Naive thymus-derived CD4-positive, alpha-beta T cell (primary cell): ENCODE measurements at regions of chr17 and their contacts with region 1.

Region 1: DNA sequence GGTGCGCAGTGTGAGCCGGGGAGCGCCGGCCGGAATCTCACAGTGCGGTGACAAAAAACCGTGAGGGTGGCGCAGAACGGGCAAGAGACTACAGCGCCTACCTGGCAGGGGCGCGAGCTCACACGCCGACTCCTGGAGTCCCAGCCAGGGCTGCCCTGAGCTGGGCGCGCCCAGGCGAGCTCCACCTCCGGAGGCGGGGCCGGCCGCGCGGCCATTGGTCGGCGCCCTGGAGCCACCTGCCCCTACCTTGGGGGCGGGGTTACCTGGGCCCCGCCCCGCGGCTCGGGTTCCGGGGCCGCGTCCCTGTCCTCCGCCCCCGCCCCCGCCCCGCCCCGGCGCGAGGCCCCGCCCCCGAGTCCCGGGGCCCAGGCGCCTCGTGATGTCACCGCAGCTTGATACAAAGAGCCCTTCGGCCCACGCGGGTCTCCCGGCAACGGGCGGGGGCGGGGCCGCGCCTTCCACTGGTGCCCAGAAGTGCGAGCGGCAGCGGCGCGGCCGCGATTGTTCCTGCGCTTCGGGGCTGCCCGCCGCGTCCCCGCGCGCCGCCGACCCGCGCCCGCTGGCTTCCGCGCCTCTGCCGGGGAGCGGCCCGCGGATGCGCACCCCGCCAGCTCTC is 96.3 kb downstream of the RAB11FIP4 start:
- DNase-seq: peak; percentile 88 to 95 (median 92)
- ATAC-seq: peak; percentile 94
- H3K4me3 ChIP-seq: peak overlapping the region; percentile 79
- H3K4me3 Mint-ChIP-seq: peak overlapping the region; percentile 85 to 98 (median 92)
- H3K27ac ChIP-seq: peak overlapping the region; percentile 90
- H3K27ac Mint-ChIP-seq: peak overlapping the region; percentile 78 to 98 (median 94)
- H3K4me1 ChIP-seq: peaks cover 40 to 43% of the 10 kb centered on the region in 2 donors
- H3K4me1 Mint-ChIP-seq: peaks cover 44 to 52% (median 48%) of the 10 kb centered on the region in 7 donors
- H3K27me3 ChIP-seq: no peaks in the 10 kb centered on the region
- H3K27me3 Mint-ChIP-seq: peaks cover 0 to 9% (median 0%) of the 10 kb centered on the region in 5 donors

Region 2: GRCh38 chr17:31313982-31314784 is 173.6 kb before region 1 on chr17 and contains the start of gene EVI2B:
- CTCF ChIA-PET with region 1: no interaction called
- POLR2A ChIA-PET with region 1: interaction called, 12 read pairs
- intact Hi-C with region 1: loop called in 1 of 2 experiments (anchors 5 kb)
- DNase-seq: peak in 7 of 9 donors; percentile 51 to 73 (median 69)
- ATAC-seq: peak; percentile 46
- H3K4me3 ChIP-seq: peak within 1 kb of the TSS; percentile 63
- H3K4me3 Mint-ChIP-seq: peak within 1 kb of the TSS; percentile 85 to 98 (median 92)
- H3K27ac ChIP-seq: peak within 1 kb of the TSS; percentile 82
- H3K27ac Mint-ChIP-seq: peak within 1 kb of the TSS; percentile 84 to 98 (median 95)
- H3K4me1 ChIP-seq: peaks cover 27 to 41% of the 10 kb centered on the region in 2 donors
- H3K4me1 Mint-ChIP-seq: peaks cover 31 to 52% (median 44%) of the 10 kb centered on the region in 7 donors
- H3K27me3 ChIP-seq: no peaks in the 10 kb centered on the region
- H3K27me3 Mint-ChIP-seq: peaks cover 0 to 2% (median 0%) of the 10 kb centered on the region in 5 donors
- total RNA-seq, gene EVI2B: 57.8 to 154 (median 134) TPM

Region 3: DNA sequence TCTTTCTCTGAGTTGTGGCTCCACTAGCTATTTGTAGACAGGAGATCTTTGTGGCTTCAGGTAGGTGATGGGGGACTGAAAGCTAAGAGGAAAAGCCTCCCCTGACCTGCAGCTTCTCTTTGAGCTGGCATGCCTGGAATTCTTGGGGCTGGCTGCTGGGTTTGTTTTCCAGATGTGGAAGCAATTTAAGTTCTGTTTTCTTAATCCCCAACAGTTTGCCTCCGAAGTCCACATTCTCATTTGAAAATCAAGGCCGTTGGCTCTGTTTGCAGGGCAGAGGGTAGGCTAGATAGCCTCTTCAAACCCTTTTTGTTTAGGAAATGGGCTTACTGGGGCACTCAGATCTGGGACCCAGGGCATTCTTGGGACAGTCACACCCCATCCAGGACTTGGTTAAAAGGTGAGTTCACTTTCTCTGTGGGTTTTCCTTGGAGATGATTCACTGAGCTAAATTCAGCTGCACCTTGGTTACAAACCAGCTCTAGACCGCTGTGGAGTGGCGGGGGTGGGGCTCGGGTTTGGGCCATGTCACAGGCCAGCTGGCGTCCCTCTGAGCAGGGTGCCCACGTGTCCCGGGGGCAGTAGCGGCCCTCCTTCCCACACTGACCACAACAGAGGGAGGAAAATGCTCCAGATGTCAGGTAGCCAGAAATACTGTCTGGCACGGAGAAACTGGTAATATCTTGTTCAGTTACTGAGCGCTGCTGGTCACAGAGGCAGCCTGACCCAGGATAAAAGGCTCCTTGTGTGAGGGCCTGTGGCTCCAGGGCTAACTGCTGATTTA is 12.2 kb after region 1 on chr17:
- CTCF ChIA-PET with region 1: interaction called, 3 read pairs
- POLR2A ChIA-PET with region 1: interaction called, 31 read pairs
- intact Hi-C with region 1: loop called in 1 of 2 experiments (anchors 1 kb)
- DNase-seq: peak in 1 of 9 donors; percentile 51
- ATAC-seq: no peak
- H3K4me3 ChIP-seq: no peak overlapping the region
- H3K4me3 Mint-ChIP-seq: peak overlapping the region in 5 of 10 donors; percentile 5 to 23 (median 14)
- H3K27ac ChIP-seq: no peak overlapping the region
- H3K27ac Mint-ChIP-seq: peak overlapping the region in 5 of 9 donors; percentile 20 to 97 (median 32)
- H3K4me1 ChIP-seq: peaks cover 23 to 31% of the 10 kb centered on the region in 2 donors
- H3K4me1 Mint-ChIP-seq: peaks cover 38 to 74% (median 68%) of the 10 kb centered on the region in 7 donors
- H3K27me3 ChIP-seq: no peaks in the 10 kb centered on the region
- H3K27me3 Mint-ChIP-seq: no peaks in the 10 kb centered on the region

Region 4: GRCh38 chr17:31524926-31525800 is 37.4 kb after region 1 on chr17:
- CTCF ChIA-PET with region 1: interaction called, 4 read pairs
- POLR2A ChIA-PET with region 1: interaction called, 3 read pairs
- intact Hi-C with region 1: loop called (anchors 2 to 5 kb)
- DNase-seq: peak; percentile 67 to 89 (median 77)
- ATAC-seq: peak; percentile 87
- H3K4me3 ChIP-seq: no peak overlapping the region
- H3K4me3 Mint-ChIP-seq: no peak overlapping the region
- H3K27ac ChIP-seq: no peak overlapping the region
- H3K27ac Mint-ChIP-seq: peak overlapping the region in 1 of 9 donors; percentile 11
- H3K4me1 ChIP-seq: no peaks in the 10 kb centered on the region
- H3K4me1 Mint-ChIP-seq: peaks cover 0 to 2% (median 0%) of the 10 kb centered on the region in 7 donors
- H3K27me3 ChIP-seq: no peaks in the 10 kb centered on the region
- H3K27me3 Mint-ChIP-seq: no peaks in the 10 kb centered on the region

Region 5: DNA sequence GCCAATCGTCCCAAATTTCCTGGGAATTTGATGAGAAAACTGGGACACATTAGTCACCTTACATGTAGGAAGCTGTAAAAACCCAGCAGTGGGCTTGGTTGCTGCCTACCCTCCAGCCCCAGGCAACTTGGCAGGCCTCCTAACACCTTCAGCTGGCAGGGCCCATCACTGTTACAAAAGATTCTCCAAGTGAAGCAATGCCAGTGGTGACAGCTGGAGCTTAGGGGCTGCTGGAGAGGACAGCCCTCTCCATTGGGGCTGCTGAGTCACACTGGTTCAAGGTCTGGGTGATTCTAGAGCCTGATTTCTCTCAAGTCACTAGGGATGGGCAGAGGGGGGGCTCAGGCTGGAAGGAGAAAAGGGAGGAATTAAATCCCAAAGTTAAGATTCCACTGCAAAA is 190.7 kb after region 1 on chr17:
- CTCF ChIA-PET with region 1: no interaction called
- POLR2A ChIA-PET with region 1: no interaction called
- intact Hi-C with region 1: no loop called
- DNase-seq: no peak
- ATAC-seq: peak; percentile 30
- H3K4me3 ChIP-seq: no peak overlapping the region
- H3K4me3 Mint-ChIP-seq: no peak overlapping the region
- H3K27ac ChIP-seq: no peak overlapping the region
- H3K27ac Mint-ChIP-seq: no peak overlapping the region
- H3K4me1 ChIP-seq: no peaks in the 10 kb centered on the region
- H3K4me1 Mint-ChIP-seq: peaks cover 0 to 8% (median 0%) of the 10 kb centered on the region in 7 donors
- H3K27me3 ChIP-seq: no peaks in the 10 kb centered on the region
- H3K27me3 Mint-ChIP-seq: peaks cover 24 to 47% (median 33%) of the 10 kb centered on the region in 5 donors

Region 6: DNA sequence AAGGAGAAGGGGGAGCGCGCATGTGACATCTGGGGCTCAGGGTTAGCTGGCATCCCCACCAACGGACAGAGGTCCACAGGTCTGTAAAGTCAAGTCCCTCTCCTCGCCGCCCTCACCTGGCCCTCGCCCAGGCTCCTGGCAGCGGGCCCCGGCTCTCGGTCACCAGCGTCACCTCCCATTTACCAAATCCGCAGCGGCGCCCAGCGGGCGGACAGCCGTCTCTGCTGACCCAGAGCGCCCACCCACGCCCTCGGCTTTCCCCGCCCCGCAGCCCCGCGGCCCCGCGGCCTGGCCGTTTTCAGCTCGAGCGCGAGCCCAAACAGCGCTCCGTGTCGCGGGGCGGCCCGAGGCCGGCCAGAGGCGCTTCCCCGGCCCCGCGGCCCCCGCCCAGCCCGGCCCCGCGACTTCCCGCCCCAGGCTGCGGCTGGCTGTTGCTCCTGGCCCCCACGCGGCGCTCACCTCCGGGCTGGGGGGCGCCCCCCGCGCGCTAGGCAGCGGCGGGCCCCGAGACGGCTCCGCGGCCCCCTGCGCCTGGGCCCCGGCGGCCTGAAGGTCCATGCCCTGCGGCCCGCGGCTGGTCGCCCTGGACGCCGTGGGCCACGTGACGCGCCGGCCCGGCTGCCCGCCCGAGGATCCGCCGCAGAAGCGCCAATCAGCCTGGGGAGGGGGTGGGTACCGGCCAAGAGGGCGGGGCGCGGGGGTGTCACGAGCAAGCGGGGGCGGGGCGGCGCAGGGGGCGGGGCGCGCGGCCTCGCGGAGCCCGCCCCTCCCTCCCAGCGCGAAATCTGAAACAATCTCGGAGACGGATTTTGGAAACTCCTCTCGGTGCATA is 371.1 kb after region 1 on chr17 and contains the start of gene COPRS:
- CTCF ChIA-PET with region 1: no interaction called
- POLR2A ChIA-PET with region 1: no interaction called
- intact Hi-C with region 1: loop called in 1 of 2 experiments (anchors 5 kb)
- DNase-seq: peak; percentile 46 to 83 (median 74)
- ATAC-seq: peak; percentile 97
- H3K4me3 ChIP-seq: peak within 1 kb of the TSS; percentile 60
- H3K4me3 Mint-ChIP-seq: peak within 1 kb of the TSS; percentile 79 to 93 (median 86)
- H3K27ac ChIP-seq: peak within 1 kb of the TSS; percentile 51
- H3K27ac Mint-ChIP-seq: peak within 1 kb of the TSS; percentile 3 to 87 (median 75)
- H3K4me1 ChIP-seq: peaks cover 0 to 7% of the 10 kb centered on the region in 2 donors
- H3K4me1 Mint-ChIP-seq: peaks cover 11 to 19% (median 15%) of the 10 kb centered on the region in 7 donors
- H3K27me3 ChIP-seq: no peaks in the 10 kb centered on the region
- H3K27me3 Mint-ChIP-seq: no peaks in the 10 kb centered on the region
- total RNA-seq, gene COPRS: 2.2 to 20.9 (median 4.2) TPM

Region 7: DNA sequence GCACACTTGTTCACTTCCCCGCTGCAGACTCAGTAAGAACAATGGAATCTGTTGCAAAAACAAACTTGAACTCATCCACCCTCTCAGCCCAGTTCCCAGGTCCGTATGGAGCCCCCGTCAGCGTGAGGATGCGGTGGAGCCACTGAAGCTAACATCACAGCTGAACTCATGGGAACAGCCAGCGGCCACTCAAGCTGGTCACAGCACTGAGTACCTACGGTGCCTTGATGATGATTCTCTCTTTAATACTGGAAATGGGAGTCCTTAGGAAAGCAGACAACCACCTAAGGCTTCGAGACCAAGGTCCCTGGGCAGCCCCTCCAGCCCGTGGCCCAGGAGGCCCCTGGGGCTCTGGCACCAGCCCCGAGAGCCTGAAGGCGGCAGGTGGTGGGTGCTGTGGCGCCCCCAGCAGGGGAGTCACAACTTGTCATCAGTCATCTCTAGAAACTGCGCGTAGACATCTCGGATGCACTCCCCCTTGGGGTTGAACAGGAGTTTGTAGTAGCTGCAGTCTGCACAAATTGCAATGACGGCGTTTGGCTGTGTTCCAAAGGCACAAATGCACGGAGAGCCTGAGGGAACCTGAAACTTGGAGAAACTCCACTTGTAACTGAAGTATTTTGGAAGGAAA is 623.5 kb after region 1 on chr17:
- CTCF ChIA-PET with region 1: no interaction called
- POLR2A ChIA-PET with region 1: no interaction called
- intact Hi-C with region 1: no loop called
- DNase-seq: peak in 7 of 9 donors; percentile 34 to 60 (median 37)
- ATAC-seq: peak; percentile 79
- H3K4me3 ChIP-seq: no peak overlapping the region
- H3K4me3 Mint-ChIP-seq: peak overlapping the region in 3 of 10 donors; percentile 24 to 51 (median 41)
- H3K27ac ChIP-seq: no peak overlapping the region
- H3K27ac Mint-ChIP-seq: peak overlapping the region in 2 of 9 donors; percentile 41 to 67
- H3K4me1 ChIP-seq: peaks cover 0 to 18% of the 10 kb centered on the region in 2 donors
- H3K4me1 Mint-ChIP-seq: peaks cover 12 to 39% (median 25%) of the 10 kb centered on the region in 7 donors
- H3K27me3 ChIP-seq: no peaks in the 10 kb centered on the region
- H3K27me3 Mint-ChIP-seq: no peaks in the 10 kb centered on the region

Region 8: DNA sequence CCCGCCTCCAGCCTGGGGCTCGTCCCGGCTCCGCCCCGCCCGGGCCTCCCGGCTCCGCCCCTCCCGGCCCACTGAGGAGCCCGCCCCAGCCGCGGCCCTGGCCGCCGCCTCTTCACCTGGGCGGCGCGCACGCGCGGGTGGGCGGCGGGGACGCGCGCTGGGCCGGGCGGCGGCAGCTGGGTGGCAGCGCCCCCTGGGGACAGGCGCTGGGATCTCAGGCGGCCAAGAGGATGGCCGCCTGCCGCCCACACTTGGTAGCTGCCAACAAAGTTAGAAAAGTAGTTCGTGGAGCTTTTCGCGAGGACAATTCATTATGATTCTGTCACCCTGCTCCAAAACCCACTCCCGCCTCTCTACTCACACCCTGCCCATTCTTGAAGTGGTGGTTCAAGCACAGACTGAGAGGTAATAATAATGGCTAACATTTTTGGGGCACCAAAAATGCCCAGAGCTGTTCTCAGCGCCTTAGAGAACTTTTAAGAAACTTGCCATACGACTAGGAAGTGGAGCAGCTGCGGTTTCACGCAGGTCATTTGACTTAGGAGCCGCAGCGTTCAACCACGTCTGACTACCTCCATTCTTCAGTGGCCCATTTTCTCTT is 1389.5 kb after region 1 on chr17:
- CTCF ChIA-PET with region 1: no interaction called
- POLR2A ChIA-PET with region 1: no interaction called
- intact Hi-C with region 1: loop called in 1 of 2 experiments (anchors 5 kb)
- DNase-seq: peak; percentile 87 to 99 (median 95)
- ATAC-seq: peak; percentile 98
- H3K4me3 ChIP-seq: peak overlapping the region; percentile 59
- H3K4me3 Mint-ChIP-seq: peak overlapping the region; percentile 72 to 88 (median 83)
- H3K27ac ChIP-seq: peak overlapping the region; percentile 66
- H3K27ac Mint-ChIP-seq: peak overlapping the region; percentile 56 to 94 (median 83)
- H3K4me1 ChIP-seq: peaks cover 0 to 8% of the 10 kb centered on the region in 2 donors
- H3K4me1 Mint-ChIP-seq: peaks cover 7 to 15% (median 11%) of the 10 kb centered on the region in 7 donors
- H3K27me3 ChIP-seq: peaks cover 0 to 4% of the 10 kb centered on the region in 2 donors
- H3K27me3 Mint-ChIP-seq: peaks cover 0 to 42% (median 7%) of the 10 kb centered on the region in 5 donors